ENCODE measurements at regions of chr3 and their contacts with region 1.

Region 1: GRCh38 chr3:8223766-8224165 is 277.9 kb upstream of the LMCD1 start:
- DNase-seq: no peak
- ATAC-seq: no peak
- H3K4me3 Mint-ChIP-seq: no peak overlapping the region
- H3K27ac Mint-ChIP-seq: no peak overlapping the region
- H3K4me1 Mint-ChIP-seq: no peaks in the 10 kb centered on the region
- H3K27me3 Mint-ChIP-seq: no peaks in the 10 kb centered on the region
- CTCF ChIP-seq: no peak

Region 2: GRCh38 chr3:8239718-8240695 is 16.2 kb after region 1 on chr3:
- CTCF ChIA-PET with region 1: interaction called, 10 read pairs
- POLR2A ChIA-PET with region 1: no interaction called
- intact Hi-C with region 1: no loop called
- DNase-seq: no peak
- ATAC-seq: peak; percentile 40
- H3K4me3 Mint-ChIP-seq: no peak overlapping the region
- H3K27ac Mint-ChIP-seq: no peak overlapping the region
- H3K4me1 Mint-ChIP-seq: no peaks in the 10 kb centered on the region
- H3K27me3 Mint-ChIP-seq: no peaks in the 10 kb centered on the region
- CTCF ChIP-seq: no peak